GM12878 (cell line): ENCODE measurements at regions of chr6 and their contacts with region 1.

Region 1: DNA sequence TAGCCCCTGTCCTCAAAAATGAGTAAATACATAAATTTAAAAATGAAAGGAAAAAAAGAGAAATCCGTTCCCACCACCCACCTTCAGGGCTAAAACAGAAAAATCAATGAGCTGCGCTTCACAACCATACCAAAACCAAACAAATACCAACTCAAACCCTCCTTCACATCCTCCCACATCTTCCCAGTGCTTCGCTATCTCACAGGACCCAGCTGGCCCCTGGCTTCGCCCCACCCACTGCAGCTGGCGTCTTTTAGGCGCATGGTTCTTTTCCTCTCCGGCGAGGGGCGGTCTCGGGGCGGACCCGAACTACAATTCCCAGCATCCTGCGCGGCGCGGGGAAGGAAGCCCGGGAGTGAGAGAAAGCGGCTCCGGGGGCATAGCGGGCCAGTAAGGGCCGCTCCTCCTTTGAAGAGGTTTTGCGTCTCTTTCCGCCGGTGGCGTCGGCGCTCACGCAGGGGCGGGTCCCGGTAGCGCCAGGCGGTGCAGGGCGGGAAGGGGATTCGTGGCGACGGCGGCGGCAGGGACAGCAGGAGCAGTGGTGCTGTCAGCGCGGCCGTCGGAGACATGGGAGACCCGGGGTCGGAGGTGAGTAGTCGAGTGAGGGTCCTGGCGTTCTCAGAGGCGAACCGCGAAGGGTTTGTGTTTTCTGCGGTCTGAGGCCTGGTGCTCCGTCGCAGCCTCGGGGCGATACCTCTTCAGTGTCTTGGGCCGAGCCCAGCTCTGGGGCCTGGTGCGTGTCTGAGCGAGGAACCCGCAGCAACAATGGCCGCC is at the start of gene ZNF451:
- DNase-seq: peak; percentile 80
- ATAC-seq: peak; percentile 94
- H3K4me3 ChIP-seq: peak within 1 kb of the TSS; percentile 66
- H3K27ac ChIP-seq: peak within 1 kb of the TSS; percentile 71
- H3K4me1 ChIP-seq: peaks cover 8% of the 10 kb centered on the region
- H3K27me3 ChIP-seq: no peaks in the 10 kb centered on the region
- CTCF ChIP-seq: no peak
- EP300 ChIP-seq: no peak
- POLR2A ChIP-seq: peak; percentile 87
- RAD21 ChIP-seq: no peak
- polyA plus RNA-seq, gene ZNF451: 6.5 to 11.6 TPM

Region 2: GRCh38 chr6:57044568-57044967 is 45.3 kb before region 1 on chr6:
- CTCF ChIA-PET with region 1: no interaction called
- POLR2A ChIA-PET with region 1: no interaction called
- RAD21 ChIA-PET with region 1: no interaction called
- SMC1A ChIA-PET with region 1: no interaction called
- in situ Hi-C with region 1: no loop called
- intact Hi-C with region 1: no loop called
- DNase-seq: no peak
- ATAC-seq: no peak
- H3K4me3 ChIP-seq: no peak overlapping the region
- H3K27ac ChIP-seq: no peak overlapping the region
- H3K4me1 ChIP-seq: peaks cover 5% of the 10 kb centered on the region; the same call in 1 of the 2 replicates
- H3K27me3 ChIP-seq: no peaks in the 10 kb centered on the region
- CTCF ChIP-seq: no peak
- EP300 ChIP-seq: no peak
- POLR2A ChIP-seq: no peak
- RAD21 ChIP-seq: no peak

Region 3: DNA sequence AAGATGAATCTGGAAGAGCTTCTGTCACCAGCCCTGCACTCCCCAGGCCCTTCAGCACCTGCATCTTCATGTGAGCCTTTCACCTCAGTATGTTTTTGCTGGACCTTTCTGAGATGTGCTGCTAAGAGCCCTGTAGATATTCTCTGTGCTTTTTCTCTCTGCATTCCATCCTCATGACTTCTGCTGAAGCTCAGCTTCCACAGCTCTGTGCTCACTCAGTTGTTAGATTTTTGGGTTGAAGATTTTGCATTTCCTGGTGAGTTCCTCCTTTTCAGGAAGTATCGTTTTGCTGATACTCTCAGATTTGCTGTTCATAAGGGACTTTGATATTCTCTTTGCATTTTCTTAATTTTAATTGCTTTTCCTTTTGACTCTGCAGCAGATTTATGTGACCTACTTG is 25.1 kb before region 1 on chr6:
- CTCF ChIA-PET with region 1: no interaction called
- POLR2A ChIA-PET with region 1: no interaction called
- RAD21 ChIA-PET with region 1: no interaction called
- SMC1A ChIA-PET with region 1: no interaction called
- in situ Hi-C with region 1: no loop called
- intact Hi-C with region 1: no loop called
- DNase-seq: no peak
- ATAC-seq: no peak
- H3K4me3 ChIP-seq: no peak overlapping the region
- H3K27ac ChIP-seq: no peak overlapping the region
- H3K4me1 ChIP-seq: no peaks in the 10 kb centered on the region
- H3K27me3 ChIP-seq: no peaks in the 10 kb centered on the region
- CTCF ChIP-seq: no peak
- EP300 ChIP-seq: no peak
- POLR2A ChIP-seq: no peak
- RAD21 ChIP-seq: no peak

Region 4: DNA sequence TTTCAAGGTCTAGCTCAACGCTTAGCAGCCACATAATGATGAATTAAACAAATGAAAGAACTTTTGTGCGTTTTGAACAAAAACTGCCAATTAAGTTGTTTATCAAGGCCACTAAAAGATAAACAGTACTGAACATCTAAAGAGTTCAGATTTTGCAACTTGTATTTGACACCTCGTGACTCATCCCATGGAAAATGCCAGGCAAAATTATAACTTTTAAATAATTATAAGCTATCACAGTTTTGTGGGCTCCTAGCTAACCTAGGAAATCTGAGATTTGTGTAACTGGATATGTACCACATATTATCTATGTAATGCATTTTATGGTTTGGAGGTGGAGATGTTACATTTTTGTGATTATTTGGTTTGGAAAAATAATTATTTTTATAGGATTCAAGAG is 72.6 kb after region 1 on chr6:
- CTCF ChIA-PET with region 1: no interaction called
- POLR2A ChIA-PET with region 1: no interaction called
- RAD21 ChIA-PET with region 1: no interaction called
- SMC1A ChIA-PET with region 1: interaction called, 6 read pairs
- in situ Hi-C with region 1: loop called (anchors 5 kb)
- intact Hi-C with region 1: no loop called
- DNase-seq: no peak
- ATAC-seq: no peak
- H3K4me3 ChIP-seq: no peak overlapping the region
- H3K27ac ChIP-seq: no peak overlapping the region
- H3K4me1 ChIP-seq: no peaks in the 10 kb centered on the region
- H3K27me3 ChIP-seq: no peaks in the 10 kb centered on the region
- CTCF ChIP-seq: no peak
- EP300 ChIP-seq: no peak
- POLR2A ChIP-seq: no peak
- RAD21 ChIP-seq: no peak

Region 5: GRCh38 chr6:57198926-57199636 is 109.2 kb after region 1 on chr6:
- CTCF ChIA-PET with region 1: no interaction called
- POLR2A ChIA-PET with region 1: no interaction called
- RAD21 ChIA-PET with region 1: no interaction called
- SMC1A ChIA-PET with region 1: no interaction called
- in situ Hi-C with region 1: no loop called
- intact Hi-C with region 1: no loop called
- DNase-seq: no peak
- ATAC-seq: peak; percentile 17; the same call in 1 of the 3 replicates
- H3K4me3 ChIP-seq: no peak overlapping the region
- H3K27ac ChIP-seq: no peak overlapping the region
- H3K4me1 ChIP-seq: no peaks in the 10 kb centered on the region
- H3K27me3 ChIP-seq: no peaks in the 10 kb centered on the region
- CTCF ChIP-seq: no peak
- EP300 ChIP-seq: no peak
- POLR2A ChIP-seq: no peak
- RAD21 ChIP-seq: no peak